Common myeloid progenitor, CD34-positive (primary cell): ENCODE measurements at regions of chr10 and their contacts with region 1.

Region 1: DNA sequence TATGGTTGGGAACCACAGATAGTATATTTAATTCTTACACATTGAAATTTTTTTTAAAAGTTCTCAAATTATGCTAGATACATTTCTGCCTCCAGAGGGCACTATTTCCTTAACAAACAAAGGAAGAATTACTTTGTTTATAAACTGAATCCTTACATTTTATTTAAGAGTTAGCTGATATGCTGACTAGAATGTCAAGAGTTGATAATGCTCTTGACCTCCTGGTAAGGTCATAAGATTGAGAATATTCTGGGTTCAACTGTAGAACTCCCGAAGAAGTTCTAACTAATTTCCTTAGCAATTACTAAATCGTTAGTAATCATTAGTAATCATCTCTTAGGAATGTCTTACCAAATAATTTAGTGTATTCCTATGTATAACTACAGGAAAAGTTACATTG is 95.3 kb upstream of the CYP26C1 start:
- DNase-seq: peak; percentile 64 to 81 (median 72)
- H3K4me3 ChIP-seq: no peak overlapping the region
- H3K27ac ChIP-seq: no peak overlapping the region
- H3K4me1 ChIP-seq: no peaks in the 10 kb centered on the region
- H3K27me3 ChIP-seq: no peaks in the 10 kb centered on the region

Region 2: GRCh38 chr10:92942284-92942683 is 23.0 kb before region 1 on chr10:
- CTCF ChIA-PET with region 1: interaction called, 10 read pairs
- POLR2A ChIA-PET with region 1: interaction called, 3 read pairs
- DNase-seq: no peak
- H3K4me3 ChIP-seq: no peak overlapping the region
- H3K27ac ChIP-seq: no peak overlapping the region
- H3K4me1 ChIP-seq: no peaks in the 10 kb centered on the region
- H3K27me3 ChIP-seq: no peaks in the 10 kb centered on the region

Region 3: DNA sequence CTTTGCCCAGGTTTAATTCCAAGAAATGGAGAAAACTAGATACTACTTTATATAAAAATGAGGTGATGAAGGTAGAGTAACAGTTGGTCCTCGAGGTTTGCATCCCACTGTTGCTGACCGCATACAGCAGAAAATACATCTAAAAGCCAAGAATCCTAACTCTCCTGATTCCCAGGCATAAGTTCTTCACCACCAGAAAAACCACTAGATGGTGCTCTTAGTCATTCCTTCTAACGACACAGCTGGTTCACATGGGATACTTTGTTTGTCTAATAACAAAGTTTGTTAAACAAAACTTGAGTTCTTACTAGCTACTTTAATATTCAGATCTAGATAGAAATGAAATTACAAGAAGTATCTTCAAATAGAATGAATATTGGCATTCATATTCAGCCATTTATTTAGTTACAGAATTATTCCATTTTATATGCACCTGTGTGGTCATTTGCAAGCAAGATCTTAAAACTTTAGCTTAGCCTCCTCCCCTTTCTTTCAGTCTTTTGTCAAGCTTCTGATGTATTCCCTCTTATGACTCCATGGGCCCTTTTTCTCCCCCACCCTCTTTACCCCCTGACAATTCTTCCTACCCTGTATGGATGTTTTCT is 41.2 kb after region 1 on chr10:
- CTCF ChIA-PET with region 1: interaction called, 10 read pairs
- POLR2A ChIA-PET with region 1: no interaction called
- DNase-seq: peak; percentile 36 to 57 (median 57)
- H3K4me3 ChIP-seq: no peak overlapping the region
- H3K27ac ChIP-seq: no peak overlapping the region
- H3K4me1 ChIP-seq: no peaks in the 10 kb centered on the region
- H3K27me3 ChIP-seq: no peaks in the 10 kb centered on the region

Region 4: DNA sequence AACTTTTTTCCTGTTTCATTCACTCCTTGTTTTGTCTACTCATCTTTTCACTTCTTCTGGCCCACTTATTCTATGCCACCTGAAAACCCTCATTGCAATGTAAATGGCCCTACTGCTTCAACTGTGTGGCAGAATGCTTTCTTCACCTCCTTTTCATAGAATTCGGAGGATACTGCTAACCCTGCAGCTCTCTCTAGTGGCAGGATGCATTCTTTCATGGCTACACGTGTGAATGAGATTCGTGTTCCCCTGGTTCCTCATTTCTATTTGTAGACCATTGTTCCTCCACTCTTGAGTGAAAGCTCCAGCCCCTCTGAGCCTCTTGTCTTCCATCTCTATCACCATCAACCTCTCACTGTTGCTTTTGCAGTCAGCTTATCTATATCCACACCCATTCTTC is 74.4 kb after region 1 on chr10:
- CTCF ChIA-PET with region 1: interaction called, 63 read pairs
- POLR2A ChIA-PET with region 1: no interaction called
- DNase-seq: peak; percentile 67 to 86 (median 85)
- H3K4me3 ChIP-seq: no peak overlapping the region
- H3K27ac ChIP-seq: no peak overlapping the region
- H3K4me1 ChIP-seq: peaks cover 0 to 15% (median 10%) of the 10 kb centered on the region in 4 experiments
- H3K27me3 ChIP-seq: no peaks in the 10 kb centered on the region